Endothelial cell of umbilical vein (primary cell): ENCODE measurements at regions of chr1 and their contacts with region 1.

Region 1: GRCh38 chr1:234499119-234499942 is 20.4 kb upstream of the TARBP1 start:
- DNase-seq: peak; percentile 84
- H3K4me3 ChIP-seq: no peak overlapping the region
- H3K27ac ChIP-seq: peak overlapping the region; percentile 26
- H3K4me1 ChIP-seq: peaks cover 8% of the 10 kb centered on the region
- H3K27me3 ChIP-seq: no peaks in the 10 kb centered on the region
- CTCF ChIP-seq: peak; percentile 90 to 94
- POLR2A ChIP-seq: no peak

Region 2: GRCh38 chr1:234531151-234531635 is 31.9 kb after region 1 on chr1:
- CTCF ChIA-PET with region 1: interaction called, 18 read pairs
- POLR2A ChIA-PET with region 1: no interaction called
- dilution Hi-C with region 1: no loop called
- intact Hi-C with region 1: no loop called
- DNase-seq: no peak
- H3K4me3 ChIP-seq: no peak overlapping the region
- H3K27ac ChIP-seq: no peak overlapping the region
- H3K4me1 ChIP-seq: peaks cover 8% of the 10 kb centered on the region
- H3K27me3 ChIP-seq: no peaks in the 10 kb centered on the region
- CTCF ChIP-seq: no peak
- POLR2A ChIP-seq: no peak

Region 3: DNA sequence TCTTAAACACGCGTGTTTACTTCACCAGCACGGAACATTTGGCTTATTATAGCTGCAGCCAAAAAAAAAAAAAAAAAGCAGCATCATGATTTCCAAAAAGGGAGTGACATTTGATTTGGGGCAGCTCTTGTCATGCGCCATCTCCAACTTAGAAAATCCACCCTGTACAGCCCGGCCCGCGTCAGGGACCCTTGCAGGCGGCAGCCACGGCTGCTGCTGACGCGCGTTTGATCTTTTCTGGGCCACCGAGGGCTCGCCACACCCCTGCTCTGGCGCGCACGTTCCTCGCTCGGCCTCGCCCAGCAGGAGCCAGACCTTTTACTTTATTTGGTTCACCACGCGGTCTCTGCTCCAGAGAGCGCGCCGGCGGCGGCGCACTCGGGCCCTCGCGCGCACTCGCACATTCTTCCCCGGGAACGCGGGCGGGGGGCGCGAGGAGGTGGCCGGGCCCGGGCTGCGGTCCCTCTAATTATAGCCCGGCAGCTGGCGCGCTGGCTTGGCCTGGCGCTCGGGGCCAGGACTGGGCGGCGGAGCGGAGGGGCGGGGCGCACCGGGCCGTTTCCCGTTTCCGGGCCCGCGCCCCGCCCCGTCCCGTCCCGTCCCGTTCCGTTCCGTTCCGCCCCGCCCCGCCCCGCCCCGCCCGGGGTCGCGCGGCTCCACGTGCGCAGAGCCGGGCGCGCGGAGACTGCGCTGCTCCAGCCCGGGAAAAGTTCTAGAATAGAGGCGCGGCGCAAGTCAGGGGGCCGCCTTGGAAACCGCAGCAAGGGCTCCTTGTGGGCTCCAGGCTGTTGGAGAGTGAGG is 100.5 kb after region 1 on chr1:
- CTCF ChIA-PET with region 1: interaction called, 79 read pairs
- POLR2A ChIA-PET with region 1: no interaction called
- dilution Hi-C with region 1: no loop called
- intact Hi-C with region 1: loop called (anchors 1 kb)
- DNase-seq: peak; percentile 92
- H3K4me3 ChIP-seq: peak overlapping the region; percentile 18 to 53 (median 32)
- H3K27ac ChIP-seq: peak overlapping the region; percentile 87
- H3K4me1 ChIP-seq: peaks cover 50% of the 10 kb centered on the region
- H3K27me3 ChIP-seq: no peaks in the 10 kb centered on the region
- CTCF ChIP-seq: peak in 1 of 2 donors; percentile 3
- POLR2A ChIP-seq: no peak

Region 4: GRCh38 chr1:234918181-234918841 is 419.0 kb after region 1 on chr1:
- CTCF ChIA-PET with region 1: interaction called, 4 read pairs
- POLR2A ChIA-PET with region 1: no interaction called
- dilution Hi-C with region 1: no loop called
- intact Hi-C with region 1: loop called (anchors 1 kb)
- DNase-seq: peak; percentile 99
- H3K4me3 ChIP-seq: no peak overlapping the region
- H3K27ac ChIP-seq: peak overlapping the region; percentile 95
- H3K4me1 ChIP-seq: peaks cover 40% of the 10 kb centered on the region
- H3K27me3 ChIP-seq: no peaks in the 10 kb centered on the region
- CTCF ChIP-seq: no peak
- POLR2A ChIP-seq: peak; percentile 77

Region 5: GRCh38 chr1:234997201-234997895 is 498.0 kb after region 1 on chr1:
- CTCF ChIA-PET with region 1: interaction called, 3 read pairs
- POLR2A ChIA-PET with region 1: no interaction called
- dilution Hi-C with region 1: no loop called
- intact Hi-C with region 1: loop called (anchors 1 kb)
- DNase-seq: peak; percentile 99
- H3K4me3 ChIP-seq: no peak overlapping the region
- H3K27ac ChIP-seq: peak overlapping the region; percentile 95
- H3K4me1 ChIP-seq: peaks cover 28% of the 10 kb centered on the region
- H3K27me3 ChIP-seq: no peaks in the 10 kb centered on the region
- CTCF ChIP-seq: no peak
- POLR2A ChIP-seq: peak; percentile 58